ENCODE measurements at regions of chr2 and their contacts with region 1.

Region 1: GRCh38 chr2:16608661-16609643 is 56.7 kb downstream of the CYRIA start:
- DNase-seq: peak; percentile 89
- H3K4me3 ChIP-seq: peak overlapping the region; percentile 59 to 86
- H3K27ac ChIP-seq: peak overlapping the region in 1 of 2 experiments; percentile 79; a peak in 2 of 4 replicates
- H3K4me1 ChIP-seq: peaks cover 4 to 5% of the 10 kb centered on the region in 2 experiments; a peak in 2 of 4 replicates
- H3K27me3 ChIP-seq: no peaks in the 10 kb centered on the region
- CTCF ChIP-seq: peak; percentile 89
- EP300 ChIP-seq: no peak; a peak in 1 of 4 replicates
- RAD21 ChIP-seq: peak; percentile 91

Region 2: DNA sequence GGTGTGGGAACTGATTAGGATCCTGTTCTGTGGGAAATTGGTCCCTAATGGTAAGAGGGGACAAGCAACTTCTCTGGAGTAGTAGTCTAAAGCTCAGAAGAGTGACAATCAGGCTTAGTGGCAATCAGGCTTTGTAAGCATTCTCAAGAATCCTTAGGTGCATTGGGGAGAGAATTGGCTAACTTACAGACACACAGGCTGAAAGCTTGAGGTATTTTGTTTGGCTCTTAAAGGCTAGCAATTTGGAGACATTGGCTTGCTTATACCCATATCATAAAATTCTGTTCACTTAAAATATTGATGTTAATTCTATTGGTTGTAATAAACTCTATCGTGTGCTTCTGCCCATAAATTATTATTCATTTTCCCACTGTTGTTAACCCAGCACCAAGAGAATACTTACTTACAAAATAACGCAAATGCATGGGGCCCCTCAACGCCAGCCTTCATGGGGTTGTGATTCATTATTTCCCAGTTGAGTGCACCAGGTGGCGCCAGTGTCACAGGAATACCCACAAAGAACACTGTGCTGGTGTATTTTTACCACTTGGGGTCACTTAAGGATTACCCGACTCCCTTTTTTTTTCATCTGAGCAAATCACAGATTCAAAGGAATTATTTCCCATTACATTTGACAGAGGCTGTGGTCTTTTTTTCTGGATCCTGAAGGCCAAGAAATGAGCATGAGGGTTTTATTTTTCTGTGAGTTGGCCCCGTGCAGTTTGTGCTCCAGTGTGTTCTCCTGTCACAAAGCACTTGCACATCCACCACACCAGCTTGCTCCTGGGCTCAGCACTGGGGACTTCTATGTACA is 971.8 kb before region 1 on chr2:
- CTCF ChIA-PET with region 1: interaction called, 81 read pairs
- POLR2A ChIA-PET with region 1: no interaction called
- DNase-seq: peak; percentile 87
- H3K4me3 ChIP-seq: no peak overlapping the region; a peak in 1 of 4 replicates
- H3K27ac ChIP-seq: peak overlapping the region in 1 of 2 experiments; percentile 70; a peak in 2 of 4 replicates
- H3K4me1 ChIP-seq: peaks cover 5 to 8% of the 10 kb centered on the region in 2 experiments; a peak in 1 of 4 replicates
- H3K27me3 ChIP-seq: no peaks in the 10 kb centered on the region
- CTCF ChIP-seq: peak; percentile 98
- EP300 ChIP-seq: no peak
- RAD21 ChIP-seq: peak; percentile 100

Region 3: GRCh38 chr2:16330571-16330970 is 278.4 kb before region 1 on chr2:
- CTCF ChIA-PET with region 1: no interaction called
- POLR2A ChIA-PET with region 1: no interaction called
- DNase-seq: no peak
- H3K4me3 ChIP-seq: no peak overlapping the region
- H3K27ac ChIP-seq: no peak overlapping the region
- H3K4me1 ChIP-seq: peaks cover 0 to 36% of the 10 kb centered on the region in 2 experiments; a peak in 2 of 4 replicates
- H3K27me3 ChIP-seq: no peaks in the 10 kb centered on the region
- CTCF ChIP-seq: no peak
- EP300 ChIP-seq: no peak
- RAD21 ChIP-seq: no peak

Region 4: DNA sequence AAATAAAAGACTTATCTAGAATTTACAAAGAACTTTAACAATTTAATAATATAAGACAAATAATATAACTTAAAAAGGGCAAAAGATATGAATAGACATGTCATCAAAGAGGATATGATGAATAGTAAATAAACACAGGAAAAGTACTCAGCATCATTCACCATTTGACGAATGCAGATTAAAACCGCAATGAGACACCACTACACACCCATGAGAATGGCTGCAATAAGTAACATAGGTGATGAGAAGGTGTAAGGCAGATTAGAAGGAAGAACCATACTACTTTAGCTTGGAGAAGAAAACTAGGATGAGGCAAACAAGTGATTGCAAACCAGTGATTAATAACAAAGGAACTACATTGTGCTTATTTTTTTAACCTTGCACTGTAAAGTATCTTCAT is 95.3 kb before region 1 on chr2:
- CTCF ChIA-PET with region 1: interaction called, 56 read pairs
- POLR2A ChIA-PET with region 1: no interaction called
- DNase-seq: no peak
- H3K4me3 ChIP-seq: no peak overlapping the region
- H3K27ac ChIP-seq: no peak overlapping the region
- H3K4me1 ChIP-seq: peaks cover 0 to under 1% of the 10 kb centered on the region in 2 experiments; a peak in 1 of 4 replicates
- H3K27me3 ChIP-seq: no peaks in the 10 kb centered on the region
- CTCF ChIP-seq: no peak
- EP300 ChIP-seq: no peak
- RAD21 ChIP-seq: no peak

Region 5: GRCh38 chr2:16568998-16569784 is 39.8 kb before region 1 on chr2:
- CTCF ChIA-PET with region 1: interaction called, 18 read pairs
- POLR2A ChIA-PET with region 1: no interaction called
- DNase-seq: no peak
- H3K4me3 ChIP-seq: no peak overlapping the region
- H3K27ac ChIP-seq: no peak overlapping the region
- H3K4me1 ChIP-seq: no peaks in the 10 kb centered on the region; a peak in 1 of 4 replicates
- H3K27me3 ChIP-seq: no peaks in the 10 kb centered on the region
- CTCF ChIP-seq: no peak
- EP300 ChIP-seq: no peak
- RAD21 ChIP-seq: no peak

Region 6: GRCh38 chr2:16635791-16636699 is 27.1 kb after region 1 on chr2:
- CTCF ChIA-PET with region 1: interaction called, 10 read pairs
- POLR2A ChIA-PET with region 1: no interaction called
- DNase-seq: peak; percentile 66
- H3K4me3 ChIP-seq: no peak overlapping the region; a peak in 1 of 4 replicates
- H3K27ac ChIP-seq: no peak overlapping the region
- H3K4me1 ChIP-seq: peaks cover 13 to 25% of the 10 kb centered on the region in 2 experiments; a peak in 2 of 4 replicates
- H3K27me3 ChIP-seq: no peaks in the 10 kb centered on the region
- CTCF ChIP-seq: no peak
- EP300 ChIP-seq: no peak
- RAD21 ChIP-seq: no peak

Region 7: DNA sequence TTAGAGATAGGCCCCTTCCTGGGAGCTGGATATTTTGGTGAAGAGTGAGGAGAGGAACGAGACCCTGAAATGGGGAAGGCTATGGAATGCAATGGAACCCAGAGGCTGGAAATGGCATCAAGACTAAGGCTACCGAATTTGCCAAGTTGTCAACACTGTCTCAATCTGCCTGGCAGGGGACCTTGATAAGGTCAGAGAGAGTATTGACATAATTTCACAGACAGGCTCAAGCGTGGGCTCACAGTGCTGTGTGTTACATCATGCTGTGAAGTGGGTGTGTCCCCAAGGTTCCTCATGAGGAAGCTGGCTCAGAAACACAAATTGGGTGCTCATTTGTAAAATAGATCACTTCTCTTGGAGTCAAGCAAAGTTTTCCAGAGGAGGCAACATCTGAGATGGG is 108.5 kb after region 1 on chr2:
- CTCF ChIA-PET with region 1: interaction called, 10 read pairs
- POLR2A ChIA-PET with region 1: no interaction called
- DNase-seq: no peak
- H3K4me3 ChIP-seq: no peak overlapping the region
- H3K27ac ChIP-seq: no peak overlapping the region
- H3K4me1 ChIP-seq: peaks cover 0 to 7% of the 10 kb centered on the region in 2 experiments; a peak in 2 of 4 replicates
- H3K27me3 ChIP-seq: no peaks in the 10 kb centered on the region
- CTCF ChIP-seq: no peak
- EP300 ChIP-seq: no peak
- RAD21 ChIP-seq: no peak

Region 8: GRCh38 chr2:16763493-16763899 is 154.5 kb after region 1 on chr2:
- CTCF ChIA-PET with region 1: interaction called, 341 read pairs
- POLR2A ChIA-PET with region 1: no interaction called
- DNase-seq: no peak
- H3K4me3 ChIP-seq: no peak overlapping the region
- H3K27ac ChIP-seq: no peak overlapping the region
- H3K4me1 ChIP-seq: no peaks in the 10 kb centered on the region; a peak in 1 of 4 replicates
- H3K27me3 ChIP-seq: no peaks in the 10 kb centered on the region
- CTCF ChIP-seq: no peak
- EP300 ChIP-seq: no peak
- RAD21 ChIP-seq: no peak

Region 9: GRCh38 chr2:16821692-16822091 is 212.7 kb after region 1 on chr2:
- CTCF ChIA-PET with region 1: no interaction called
- POLR2A ChIA-PET with region 1: no interaction called
- DNase-seq: no peak
- H3K4me3 ChIP-seq: no peak overlapping the region
- H3K27ac ChIP-seq: peak overlapping the region in 1 of 2 experiments; percentile 19; a peak in 2 of 4 replicates
- H3K4me1 ChIP-seq: peaks cover 0 to 5% of the 10 kb centered on the region in 2 experiments; a peak in 2 of 4 replicates
- H3K27me3 ChIP-seq: no peaks in the 10 kb centered on the region
- CTCF ChIP-seq: no peak
- EP300 ChIP-seq: peak in 1 of 2 experiments; percentile 81; a peak in 1 of 4 replicates
- RAD21 ChIP-seq: peak; percentile 19; the same call in 1 of the 2 replicates

Region 10: DNA sequence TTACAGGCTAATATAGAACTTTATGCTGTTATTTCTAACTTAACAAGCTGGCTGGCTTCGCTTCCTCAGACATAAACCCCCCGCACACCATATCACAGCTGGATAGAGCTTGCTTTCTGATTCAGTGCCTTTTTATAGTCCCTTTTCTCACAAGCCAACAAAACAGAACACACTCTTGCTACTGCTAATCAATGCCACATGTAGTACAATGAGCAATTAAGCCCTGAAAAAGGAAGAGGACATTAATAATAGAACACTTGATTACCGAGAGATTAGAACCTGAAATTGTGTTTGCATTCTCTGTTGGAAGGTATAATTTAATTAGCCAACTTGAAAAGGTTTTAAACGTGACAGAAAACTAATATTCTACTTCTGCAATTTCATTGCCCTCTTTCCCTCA is 324.4 kb after region 1 on chr2:
- CTCF ChIA-PET with region 1: no interaction called
- POLR2A ChIA-PET with region 1: no interaction called
- DNase-seq: peak; percentile 63
- H3K4me3 ChIP-seq: no peak overlapping the region
- H3K27ac ChIP-seq: peak overlapping the region in 1 of 2 experiments; percentile 81; a peak in 2 of 4 replicates
- H3K4me1 ChIP-seq: peaks cover 0 to 19% of the 10 kb centered on the region in 2 experiments; a peak in 2 of 4 replicates
- H3K27me3 ChIP-seq: no peaks in the 10 kb centered on the region
- CTCF ChIP-seq: no peak
- EP300 ChIP-seq: peak in 1 of 2 experiments; percentile 99; a peak in 2 of 4 replicates
- RAD21 ChIP-seq: peak; percentile 52

Measured in SK-N-SH (cell line).